ENCODE measurements at regions of chr9 and their contacts with region 1.

Region 1: DNA sequence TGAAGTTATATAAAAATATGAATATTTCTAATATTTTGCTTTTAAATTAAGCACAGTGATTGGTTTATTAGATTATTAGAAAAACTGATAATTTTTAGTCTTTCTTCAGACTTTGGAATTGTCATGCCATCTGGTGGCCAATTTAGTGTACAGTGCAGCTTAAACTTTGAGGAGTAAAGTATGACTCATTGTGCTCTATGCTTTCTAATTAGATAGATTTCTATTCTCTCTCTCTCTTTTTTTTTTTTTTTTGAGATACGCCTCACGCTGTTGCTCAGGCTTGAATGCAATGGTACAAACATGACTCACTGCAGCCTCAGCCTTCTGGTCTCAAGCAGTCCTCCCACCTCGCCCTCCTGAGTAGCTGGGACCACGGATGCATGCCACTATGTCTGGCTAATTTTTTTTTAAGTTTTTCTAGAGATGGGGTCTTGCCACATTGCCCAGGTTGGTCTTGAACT is 42.1 kb upstream of the GPR21 start:
- DNase-seq: peak in 1 of 2 experiments; percentile 25
- H3K4me3 ChIP-seq: no peak overlapping the region
- H3K4me3 Mint-ChIP-seq: no peak overlapping the region
- H3K27ac Mint-ChIP-seq: no peak overlapping the region
- H3K4me1 ChIP-seq: no peaks in the 10 kb centered on the region
- H3K4me1 Mint-ChIP-seq: no peaks in the 10 kb centered on the region
- H3K27me3 ChIP-seq: no peaks in the 10 kb centered on the region
- H3K27me3 Mint-ChIP-seq: no peaks in the 10 kb centered on the region
- CTCF ChIP-seq: peak; percentile 47 to 59

Region 2: GRCh38 chr9:122904823-122905710 is 86.3 kb before region 1 on chr9 and contains the start of gene RC3H2:
- CTCF ChIA-PET with region 1: no interaction called
- POLR2A ChIA-PET with region 1: no interaction called
- intact Hi-C with region 1: loop called (anchors 2 kb)
- DNase-seq: peak; percentile 99 to 100
- H3K4me3 ChIP-seq: peak within 1 kb of the TSS; percentile 70
- H3K4me3 Mint-ChIP-seq: peak within 1 kb of the TSS; percentile 86
- H3K27ac Mint-ChIP-seq: peak within 1 kb of the TSS; percentile 90
- H3K4me1 ChIP-seq: no peaks in the 10 kb centered on the region; the same call in 1 of the 2 replicates
- H3K4me1 Mint-ChIP-seq: no peaks in the 10 kb centered on the region
- H3K27me3 ChIP-seq: no peaks in the 10 kb centered on the region
- H3K27me3 Mint-ChIP-seq: no peaks in the 10 kb centered on the region
- CTCF ChIP-seq: no peak
- total RNA-seq, gene RC3H2: 53.8 and 55.5 TPM in 2 replicates

Region 3: GRCh38 chr9:122912964-122913673 is 78.3 kb before region 1 on chr9 and contains the start of gene ZBTB6:
- CTCF ChIA-PET with region 1: interaction called, 5 read pairs
- POLR2A ChIA-PET with region 1: no interaction called
- intact Hi-C with region 1: loop called (anchors 1 kb)
- DNase-seq: peak; percentile 79 to 82
- H3K4me3 ChIP-seq: peak within 1 kb of the TSS; percentile 87
- H3K4me3 Mint-ChIP-seq: peak within 1 kb of the TSS; percentile 94
- H3K27ac Mint-ChIP-seq: peak within 1 kb of the TSS; percentile 85
- H3K4me1 ChIP-seq: peaks cover 6% of the 10 kb centered on the region; the same call in 1 of the 2 replicates
- H3K4me1 Mint-ChIP-seq: no peaks in the 10 kb centered on the region
- H3K27me3 ChIP-seq: no peaks in the 10 kb centered on the region
- H3K27me3 Mint-ChIP-seq: no peaks in the 10 kb centered on the region
- CTCF ChIP-seq: no peak
- total RNA-seq, gene ZBTB6: 6.8 and 7.2 TPM in 2 replicates

Region 4: DNA sequence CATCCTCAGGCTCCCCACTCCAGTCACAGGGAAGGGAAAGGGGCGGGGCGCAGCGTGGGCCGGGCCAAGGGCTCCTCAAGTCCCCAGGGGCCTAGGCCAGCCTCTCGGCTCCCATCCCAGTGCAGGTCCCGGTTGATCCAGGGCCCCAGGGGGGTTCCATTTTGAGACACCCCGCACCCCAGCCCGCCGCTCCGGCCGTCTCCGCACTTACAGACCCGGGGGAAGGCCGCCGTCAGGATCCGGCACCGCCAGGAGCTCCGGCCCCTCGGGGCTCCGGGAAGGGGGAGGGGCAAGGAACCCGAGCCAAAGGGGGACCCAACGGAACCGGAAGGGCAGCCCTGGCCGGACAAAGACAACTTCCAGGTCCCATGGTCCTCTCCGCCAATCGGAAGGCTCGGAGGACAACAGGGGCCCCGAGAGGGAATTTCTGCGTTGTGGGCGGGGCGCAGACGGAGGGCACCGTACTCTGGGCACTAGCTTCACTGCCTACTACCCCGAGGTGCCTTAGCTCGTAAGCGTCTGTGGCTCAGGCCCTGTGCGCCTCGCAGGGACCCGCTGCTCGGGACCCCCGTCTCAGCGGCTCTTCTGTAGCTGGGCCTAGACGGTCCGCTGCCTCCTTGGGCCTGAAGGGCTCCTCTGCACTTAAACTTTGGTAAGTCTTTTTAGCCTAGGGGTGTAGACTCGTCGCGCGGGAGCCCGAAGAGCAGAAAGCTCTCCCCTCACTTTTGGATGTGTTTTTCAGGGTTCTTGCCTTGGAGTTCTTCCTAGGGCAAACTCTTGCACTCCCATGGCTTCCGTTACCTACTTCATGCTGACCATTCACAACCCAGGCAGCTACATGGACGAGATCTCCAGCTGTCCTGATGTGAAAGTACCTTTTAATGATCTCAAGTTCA is 59.9 kb before region 1 on chr9 and contains the start of gene ZBTB26:
- CTCF ChIA-PET with region 1: no interaction called
- POLR2A ChIA-PET with region 1: interaction called, 4 read pairs
- intact Hi-C with region 1: loop called (anchors 1 kb)
- DNase-seq: peak; percentile 93 to 96
- H3K4me3 ChIP-seq: peak within 1 kb of the TSS; percentile 74
- H3K4me3 Mint-ChIP-seq: no peak within 1 kb of the TSS
- H3K27ac Mint-ChIP-seq: no peak within 1 kb of the TSS
- H3K4me1 ChIP-seq: no peaks in the 10 kb centered on the region; the same call in 1 of the 2 replicates
- H3K4me1 Mint-ChIP-seq: peaks cover 9% of the 10 kb centered on the region
- H3K27me3 ChIP-seq: no peaks in the 10 kb centered on the region
- H3K27me3 Mint-ChIP-seq: no peaks in the 10 kb centered on the region
- CTCF ChIP-seq: no peak
- total RNA-seq, gene ZBTB26: 8.7 and 10.3 TPM in 2 replicates

Region 5: GRCh38 chr9:122940603-122941559 is 50.5 kb before region 1 on chr9 and contains the start of gene RABGAP1:
- CTCF ChIA-PET with region 1: no interaction called
- POLR2A ChIA-PET with region 1: interaction called, 10 read pairs
- intact Hi-C with region 1: no loop called
- DNase-seq: peak; percentile 98 to 99
- H3K4me3 ChIP-seq: peak within 1 kb of the TSS; percentile 80
- H3K4me3 Mint-ChIP-seq: peak within 1 kb of the TSS; percentile 94
- H3K27ac Mint-ChIP-seq: peak within 1 kb of the TSS; percentile 87
- H3K4me1 ChIP-seq: peaks cover 9% of the 10 kb centered on the region; the same call in 1 of the 2 replicates
- H3K4me1 Mint-ChIP-seq: peaks cover 14% of the 10 kb centered on the region
- H3K27me3 ChIP-seq: no peaks in the 10 kb centered on the region
- H3K27me3 Mint-ChIP-seq: no peaks in the 10 kb centered on the region
- CTCF ChIP-seq: no peak
- total RNA-seq, gene RABGAP1: 52.1 and 55.4 TPM in 2 replicates

Region 6: GRCh38 chr9:123016631-123017030 is 25.2 kb after region 1 on chr9:
- CTCF ChIA-PET with region 1: no interaction called
- POLR2A ChIA-PET with region 1: no interaction called
- intact Hi-C with region 1: no loop called
- DNase-seq: no peak
- H3K4me3 ChIP-seq: no peak overlapping the region
- H3K4me3 Mint-ChIP-seq: no peak overlapping the region
- H3K27ac Mint-ChIP-seq: no peak overlapping the region
- H3K4me1 ChIP-seq: no peaks in the 10 kb centered on the region
- H3K4me1 Mint-ChIP-seq: no peaks in the 10 kb centered on the region
- H3K27me3 ChIP-seq: no peaks in the 10 kb centered on the region
- H3K27me3 Mint-ChIP-seq: no peaks in the 10 kb centered on the region
- CTCF ChIP-seq: no peak

Measured in Caco-2 (cell line).